PC-3 (cell line): ENCODE measurements at regions of chr2 and their contacts with region 1.

Region 1: DNA sequence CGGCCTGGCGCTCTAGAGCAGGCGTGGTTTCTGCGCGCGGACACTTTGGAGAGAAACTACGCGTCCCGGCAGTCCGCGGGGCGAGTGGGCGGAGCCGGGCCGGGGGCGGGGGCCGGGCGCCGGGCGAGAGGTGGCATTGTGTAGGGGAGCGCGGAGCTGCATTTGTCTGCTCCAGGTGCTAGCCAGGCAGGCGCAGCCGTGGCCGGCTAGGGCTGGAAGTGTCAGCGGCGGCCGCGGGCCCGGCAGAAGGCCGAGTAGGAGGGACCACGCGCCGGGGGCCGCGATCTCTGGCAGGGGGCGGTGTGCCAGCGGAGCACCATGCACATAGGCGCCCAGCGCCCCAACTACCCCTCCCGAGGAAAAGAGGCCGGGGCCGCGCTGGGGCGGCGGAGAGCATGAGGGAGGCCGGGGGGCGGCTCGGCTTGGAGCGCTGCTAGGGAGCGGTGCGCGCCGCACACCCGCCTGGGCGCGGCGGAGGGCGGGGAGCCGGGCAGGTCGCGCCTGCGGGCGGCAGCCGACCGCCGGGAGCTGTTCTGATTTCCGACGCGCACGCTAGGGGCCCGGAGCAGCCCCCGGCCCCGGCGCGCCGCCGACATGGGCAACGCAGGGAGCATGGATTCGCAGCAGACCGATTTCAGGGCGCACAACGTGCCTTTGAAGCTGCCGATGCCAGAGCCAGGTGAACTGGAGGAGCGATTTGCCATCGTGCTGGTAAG is at the start of gene FMNL2:
- DNase-seq: peak; percentile 84
- ATAC-seq: peak; percentile 80
- H3K4me3 ChIP-seq: peak within 1 kb of the TSS; percentile 84
- H3K27ac ChIP-seq: no peak within 1 kb of the TSS
- H3K4me1 ChIP-seq: peaks cover 33% of the 10 kb centered on the region
- H3K27me3 ChIP-seq: no peaks in the 10 kb centered on the region
- CTCF ChIP-seq: no peak
- total RNA-seq, gene FMNL2: 15.6 and 15.8 TPM in 2 replicates

Region 2: DNA sequence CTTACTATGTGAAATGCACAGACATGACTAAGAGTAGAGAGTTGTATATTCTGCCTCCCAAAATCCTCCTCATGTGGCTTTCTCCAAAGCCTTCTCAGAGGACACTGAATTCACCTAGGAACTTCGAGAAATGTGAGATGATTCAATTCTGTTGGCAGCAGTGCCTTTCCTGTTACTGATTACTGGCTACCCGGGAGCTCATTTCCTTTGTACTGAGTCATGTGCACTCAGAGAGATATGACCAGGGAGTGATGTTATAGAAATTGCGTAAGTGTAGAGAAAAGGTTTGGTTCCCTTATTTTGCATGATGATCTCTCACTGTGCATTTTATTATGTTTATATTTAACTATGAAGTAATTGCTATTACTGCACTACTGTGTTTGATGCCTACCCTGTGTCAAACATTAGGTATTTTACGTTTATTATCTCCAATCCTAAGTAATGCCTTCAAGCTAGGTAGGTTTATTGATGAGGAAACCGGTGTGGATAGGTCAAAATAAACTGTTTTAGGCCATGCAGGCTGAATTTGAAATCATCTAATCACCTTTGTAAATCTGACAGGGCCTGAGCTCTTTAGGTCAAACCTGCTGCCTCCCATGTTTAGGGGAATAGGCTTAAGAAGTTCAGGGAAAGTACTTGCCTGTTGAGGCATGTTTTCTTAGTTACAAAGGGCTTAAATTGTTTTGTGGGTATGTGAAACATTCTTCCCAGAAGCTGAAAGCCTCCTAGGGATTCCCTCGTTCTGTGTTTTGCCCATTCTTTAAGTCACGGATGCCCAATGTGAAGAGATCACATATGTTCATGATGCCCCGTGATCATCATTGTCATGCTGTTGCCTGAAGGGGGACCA is 86.6 kb after region 1 on chr2:
- CTCF ChIA-PET with region 1: no interaction called
- POLR2A ChIA-PET with region 1: no interaction called
- intact Hi-C with region 1: loop called (anchors 5 kb)
- DNase-seq: peak; percentile 98
- ATAC-seq: peak; percentile 95
- H3K4me3 ChIP-seq: no peak overlapping the region
- H3K27ac ChIP-seq: peak overlapping the region; percentile 82
- H3K4me1 ChIP-seq: peaks cover 26% of the 10 kb centered on the region
- H3K27me3 ChIP-seq: no peaks in the 10 kb centered on the region
- CTCF ChIP-seq: no peak

Region 3: GRCh38 chr2:152445791-152446201 is 110.6 kb after region 1 on chr2:
- CTCF ChIA-PET with region 1: no interaction called
- POLR2A ChIA-PET with region 1: no interaction called
- intact Hi-C with region 1: loop called (anchors 10 kb)
- DNase-seq: peak; percentile 73
- ATAC-seq: peak; percentile 91
- H3K4me3 ChIP-seq: no peak overlapping the region
- H3K27ac ChIP-seq: peak overlapping the region; percentile 66
- H3K4me1 ChIP-seq: peaks cover 23% of the 10 kb centered on the region
- H3K27me3 ChIP-seq: no peaks in the 10 kb centered on the region
- CTCF ChIP-seq: no peak

Region 4: DNA sequence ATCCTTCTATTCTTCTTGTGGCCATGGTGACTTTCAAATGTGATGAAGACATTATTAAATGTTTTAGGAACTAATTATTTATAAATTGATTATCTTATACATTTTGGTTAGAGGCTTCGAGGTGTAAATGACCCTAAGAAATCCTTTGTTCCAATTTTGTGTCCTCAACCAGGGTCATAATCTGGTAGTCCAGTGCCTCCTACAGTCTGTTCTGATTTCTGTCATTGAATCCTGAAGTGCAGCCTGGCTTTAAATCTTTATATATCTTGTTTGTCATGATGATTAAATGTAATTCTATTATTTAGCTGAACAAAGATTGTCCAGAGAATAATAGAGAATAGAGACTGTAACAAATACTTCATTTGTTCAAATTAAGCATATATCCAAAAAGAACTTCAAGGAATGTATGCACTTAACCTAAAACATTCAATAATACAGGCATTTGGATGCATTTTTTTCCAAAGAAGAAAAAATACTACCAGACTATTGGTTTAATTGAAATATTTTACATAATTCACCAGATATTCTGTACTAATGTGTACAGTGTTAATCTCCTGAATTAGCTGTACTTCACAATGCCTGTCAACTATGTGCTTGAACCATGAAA is 292.3 kb after region 1 on chr2:
- CTCF ChIA-PET with region 1: no interaction called
- POLR2A ChIA-PET with region 1: interaction called, 5 read pairs
- intact Hi-C with region 1: loop called (anchors 2 kb)
- DNase-seq: peak; percentile 54
- ATAC-seq: peak; percentile 59; the same call in 1 of the 2 replicates
- H3K4me3 ChIP-seq: no peak overlapping the region
- H3K27ac ChIP-seq: no peak overlapping the region
- H3K4me1 ChIP-seq: no peaks in the 10 kb centered on the region
- H3K27me3 ChIP-seq: no peaks in the 10 kb centered on the region
- CTCF ChIP-seq: peak; percentile 80

Region 5: GRCh38 chr2:152635635-152636298 is 300.6 kb after region 1 on chr2:
- CTCF ChIA-PET with region 1: interaction called, 3 read pairs
- POLR2A ChIA-PET with region 1: no interaction called
- intact Hi-C with region 1: loop called (anchors 2 kb)
- DNase-seq: peak; percentile 69
- ATAC-seq: peak; percentile 84
- H3K4me3 ChIP-seq: no peak overlapping the region
- H3K27ac ChIP-seq: no peak overlapping the region
- H3K4me1 ChIP-seq: no peaks in the 10 kb centered on the region
- H3K27me3 ChIP-seq: no peaks in the 10 kb centered on the region
- CTCF ChIP-seq: peak; percentile 85